GM23248 (cell line): ENCODE measurements at regions of chr5 and their contacts with region 1.

Region 1: GRCh38 chr5:36507332-36507952 is 99.0 kb upstream of the SLC1A3 start:
- DNase-seq: peak; percentile 82
- H3K4me3 ChIP-seq: no peak overlapping the region
- H3K27ac ChIP-seq: no peak overlapping the region
- H3K4me1 ChIP-seq: peaks cover 17% of the 10 kb centered on the region
- H3K27me3 ChIP-seq: no peaks in the 10 kb centered on the region; the same call in 1 of the 2 replicates

Region 2: GRCh38 chr5:36422952-36423351 is 84.5 kb before region 1 on chr5:
- in situ Hi-C with region 1: loop called (anchors 10 kb)
- DNase-seq: peak; percentile 68
- H3K4me3 ChIP-seq: no peak overlapping the region
- H3K27ac ChIP-seq: no peak overlapping the region
- H3K4me1 ChIP-seq: peaks cover 13% of the 10 kb centered on the region; the same call in 1 of the 2 replicates
- H3K27me3 ChIP-seq: no peaks in the 10 kb centered on the region

Region 3: DNA sequence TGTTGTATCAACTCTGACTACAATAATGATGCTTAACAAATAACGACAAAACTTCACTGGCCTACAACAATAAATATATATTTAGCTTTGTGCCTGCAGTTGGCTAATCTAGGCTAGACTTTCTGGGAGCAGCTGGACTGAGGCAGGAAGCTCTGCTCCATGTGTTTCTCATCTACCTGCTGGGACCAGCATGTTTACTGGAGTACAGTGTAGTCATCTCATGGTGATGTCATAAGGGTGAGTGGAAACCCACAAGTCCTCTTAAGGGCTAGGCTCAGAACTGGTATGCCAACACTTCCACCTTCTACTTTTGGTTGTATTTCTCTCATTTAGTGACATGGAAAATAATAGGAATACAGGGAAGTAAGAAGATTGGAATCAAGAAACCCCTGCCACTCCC is 283.4 kb after region 1 on chr5:
- in situ Hi-C with region 1: no loop called
- DNase-seq: peak; percentile 9
- H3K4me3 ChIP-seq: no peak overlapping the region
- H3K27ac ChIP-seq: no peak overlapping the region
- H3K4me1 ChIP-seq: no peaks in the 10 kb centered on the region
- H3K27me3 ChIP-seq: no peaks in the 10 kb centered on the region; the same call in none of the 2 replicates

Region 4: DNA sequence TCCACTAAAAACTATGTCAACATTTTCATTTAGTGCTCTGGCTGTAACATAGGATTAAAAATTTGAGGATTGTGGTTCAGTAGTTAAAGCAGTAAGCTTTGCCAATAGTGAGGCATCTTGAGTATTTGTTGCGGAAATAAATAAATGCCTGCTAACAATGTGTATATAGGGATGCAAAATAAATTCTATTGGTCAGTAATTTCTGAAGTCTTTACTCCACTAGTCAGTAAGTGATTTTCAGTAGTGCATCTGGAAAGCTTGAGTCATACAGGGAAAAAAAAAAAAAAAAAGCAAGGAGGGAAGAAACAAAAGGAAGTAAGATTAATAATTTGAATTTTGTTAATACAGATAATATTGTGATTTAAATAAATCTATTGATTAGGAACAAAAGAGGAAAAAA is 390.2 kb after region 1 on chr5:
- in situ Hi-C with region 1: no loop called
- DNase-seq: peak; percentile 60
- H3K4me3 ChIP-seq: no peak overlapping the region
- H3K27ac ChIP-seq: peak overlapping the region; percentile 2; the same call in 1 of the 2 replicates
- H3K4me1 ChIP-seq: peaks cover 21% of the 10 kb centered on the region
- H3K27me3 ChIP-seq: no peaks in the 10 kb centered on the region